Right cardiac atrium (tissue), 5 donors: ENCODE measurements at regions of chr20 and their contacts with region 1.

Region 1: GRCh38 chr20:7866285-7866684 is 74.0 kb downstream of the HAO1 start:
- DNase-seq: peak in 2 of 3 donors; percentile 13 to 46
- ATAC-seq: peak; percentile 74 to 78
- H3K4me3 ChIP-seq: no peak overlapping the region
- H3K27ac ChIP-seq: no peak overlapping the region
- H3K4me1 ChIP-seq: no peaks in the 10 kb centered on the region
- H3K27me3 ChIP-seq: no peaks in the 10 kb centered on the region

Region 2: DNA sequence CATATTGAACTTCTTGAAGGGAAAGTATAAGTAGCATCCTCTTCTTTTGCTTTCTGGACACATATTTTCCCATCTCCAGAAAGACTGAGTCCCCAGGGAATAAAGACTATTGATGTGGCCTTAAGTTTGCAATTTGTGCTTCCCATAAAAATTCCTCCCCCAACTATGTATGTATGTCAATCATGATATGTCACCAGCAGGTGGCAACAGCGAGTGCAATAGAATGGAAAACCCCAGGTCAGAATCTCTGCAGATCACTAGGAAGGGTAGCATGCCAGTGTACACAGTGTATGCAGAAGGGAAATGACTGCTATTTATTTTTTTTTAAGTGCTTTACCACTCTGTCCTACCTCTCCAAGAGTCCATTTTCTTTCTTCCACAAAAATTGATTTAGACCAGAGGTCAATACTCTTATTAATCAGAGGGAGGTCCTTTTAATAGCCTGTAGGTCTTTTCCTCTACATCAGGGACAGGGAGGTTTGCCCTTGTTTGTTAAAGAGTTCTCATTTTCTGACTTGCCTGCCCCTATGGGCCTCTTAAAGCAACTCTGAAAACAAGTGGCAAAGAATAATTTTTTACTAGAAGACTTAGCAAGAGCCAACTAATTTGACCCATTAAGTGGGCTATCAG is 1037.4 kb before region 1 on chr20:
- intact Hi-C with region 1: loop called in 1 of 4 experiments (anchors 10 kb)
- DNase-seq: peak; percentile 53 to 68 (median 58)
- ATAC-seq: peak; percentile 87 to 91
- H3K4me3 ChIP-seq: no peak overlapping the region
- H3K27ac ChIP-seq: no peak overlapping the region
- H3K4me1 ChIP-seq: no peaks in the 10 kb centered on the region
- H3K27me3 ChIP-seq: no peaks in the 10 kb centered on the region

Region 3: DNA sequence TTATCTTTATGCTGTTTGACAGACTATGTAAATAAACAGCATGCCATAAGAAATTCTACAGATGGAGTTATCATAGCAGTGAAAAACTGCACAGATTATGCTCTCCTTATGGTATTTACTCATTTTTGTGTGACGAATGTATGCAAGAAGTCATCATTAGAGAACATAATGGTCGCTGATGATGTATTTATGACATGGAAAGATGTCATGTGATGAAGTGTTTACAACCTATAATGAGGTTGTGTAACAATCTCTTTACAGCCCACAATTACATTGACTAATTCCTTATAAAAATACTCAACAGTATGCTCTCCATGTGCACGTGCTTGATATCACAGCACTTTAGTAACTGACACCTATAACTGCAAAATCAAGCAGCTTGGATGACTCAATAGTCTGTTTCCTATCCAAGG is 906.4 kb before region 1 on chr20:
- intact Hi-C with region 1: loop called in 1 of 4 experiments (anchors 10 kb)
- DNase-seq: no peak
- ATAC-seq: no peak
- H3K4me3 ChIP-seq: no peak overlapping the region
- H3K27ac ChIP-seq: no peak overlapping the region
- H3K4me1 ChIP-seq: no peaks in the 10 kb centered on the region
- H3K27me3 ChIP-seq: no peaks in the 10 kb centered on the region